Spleen (tissue), 13 donors: ENCODE measurements at regions of chr9 and their contacts with region 1.

Region 1: GRCh38 chr9:129602598-129603415 is 18.1 kb downstream of the C9orf50 start:
- DNase-seq: no peak
- H3K4me3 ChIP-seq: no peak overlapping the region
- H3K27ac ChIP-seq: peak overlapping the region in 2 of 8 donors; percentile 28 to 50
- H3K4me1 ChIP-seq: peaks cover 11 to 56% (median 31%) of the 10 kb centered on the region in 6 donors
- H3K27me3 ChIP-seq: peaks cover 0 to 32% (median 8%) of the 10 kb centered on the region in 7 donors
- CTCF ChIP-seq: no peak
- POLR2A ChIP-seq: no peak

Region 2: DNA sequence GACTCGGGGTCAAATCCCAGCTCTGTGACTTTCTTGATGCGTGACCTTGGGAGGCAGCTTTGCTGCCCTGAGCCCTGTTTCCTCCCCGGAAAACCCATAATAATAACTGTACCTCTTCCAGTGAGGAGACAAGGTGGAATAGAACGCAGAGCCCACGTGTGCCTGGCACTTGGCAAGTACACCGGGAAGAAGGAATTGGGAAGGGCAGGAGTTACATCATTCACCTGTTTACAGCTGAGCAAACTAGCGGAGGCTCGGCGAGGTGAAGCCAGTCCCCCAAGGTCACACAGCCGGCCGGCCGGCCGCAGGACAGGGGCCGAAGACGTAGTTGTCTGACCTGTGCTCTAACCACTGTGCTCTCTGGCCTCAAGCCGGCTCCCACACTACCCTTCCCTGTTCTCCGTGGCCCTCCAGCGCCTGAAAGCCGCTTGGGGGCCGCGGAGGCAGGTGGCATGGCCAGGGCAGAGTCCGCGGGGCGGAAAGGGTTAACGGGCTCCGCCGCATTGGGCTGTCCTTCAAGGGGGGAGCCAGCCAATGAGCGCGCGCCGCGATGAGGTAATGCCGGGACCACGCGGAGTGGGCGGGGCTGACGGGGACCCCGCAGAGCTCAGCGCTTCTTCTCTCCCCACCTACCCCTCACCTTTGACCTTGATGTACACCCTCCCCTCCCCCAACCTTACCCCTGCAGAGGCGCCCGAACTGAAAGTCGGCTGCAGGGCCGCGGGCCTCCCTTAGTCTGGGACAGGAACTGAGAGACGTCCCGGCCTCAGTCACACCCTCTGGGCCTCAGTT is 107.1 kb before region 1 on chr9:
- intact Hi-C with region 1: loop called (anchors 5 kb)
- DNase-seq: peak; percentile 93
- H3K4me3 ChIP-seq: peak overlapping the region; percentile 24 to 74 (median 52)
- H3K27ac ChIP-seq: peak overlapping the region; percentile 81 to 92 (median 90)
- H3K4me1 ChIP-seq: peaks cover 27 to 77% (median 58%) of the 10 kb centered on the region in 6 donors
- H3K27me3 ChIP-seq: peaks cover 0 to 34% (median 6%) of the 10 kb centered on the region in 7 donors
- CTCF ChIP-seq: peak in 1 of 11 experiments; percentile 5
- POLR2A ChIP-seq: no peak